Mammary epithelial cell (primary cell): ENCODE measurements at regions of chr2 and their contacts with region 1.

Region 1: GRCh38 chr2:229921892-229922445 is at the start of gene TRIP12:
- DNase-seq: peak; percentile 97
- H3K4me3 ChIP-seq: peak within 1 kb of the TSS; percentile 74 to 84 (median 80)
- H3K27ac ChIP-seq: peak within 1 kb of the TSS; percentile 79
- H3K4me1 ChIP-seq: peaks cover 14% of the 10 kb centered on the region
- H3K27me3 ChIP-seq: no peaks in the 10 kb centered on the region
- CTCF ChIP-seq: no peak
- total RNA-seq, gene TRIP12: 235 to 245 TPM

Region 2: GRCh38 chr2:229800997-229801754 is 120.8 kb before region 1 on chr2:
- CTCF ChIA-PET with region 1: no interaction called
- dilution Hi-C with region 1: no loop called
- in situ Hi-C with region 1: no loop called
- intact Hi-C with region 1: loop called (anchors 2 kb)
- DNase-seq: peak; percentile 35
- H3K4me3 ChIP-seq: no peak overlapping the region
- H3K27ac ChIP-seq: peak overlapping the region; percentile 47
- H3K4me1 ChIP-seq: peaks cover 10% of the 10 kb centered on the region
- H3K27me3 ChIP-seq: no peaks in the 10 kb centered on the region
- CTCF ChIP-seq: peak; percentile 78 to 79

Region 3: GRCh38 chr2:229955663-229956062 is 33.7 kb after region 1 on chr2:
- CTCF ChIA-PET with region 1: no interaction called
- dilution Hi-C with region 1: no loop called
- in situ Hi-C with region 1: no loop called
- intact Hi-C with region 1: no loop called
- DNase-seq: no peak
- H3K4me3 ChIP-seq: no peak overlapping the region
- H3K27ac ChIP-seq: no peak overlapping the region
- H3K4me1 ChIP-seq: no peaks in the 10 kb centered on the region
- H3K27me3 ChIP-seq: no peaks in the 10 kb centered on the region
- CTCF ChIP-seq: no peak

Region 4: GRCh38 chr2:230262246-230262645 is 340.3 kb after region 1 on chr2:
- CTCF ChIA-PET with region 1: no interaction called
- dilution Hi-C with region 1: no loop called
- in situ Hi-C with region 1: no loop called
- intact Hi-C with region 1: no loop called
- DNase-seq: no peak
- H3K4me3 ChIP-seq: no peak overlapping the region
- H3K27ac ChIP-seq: no peak overlapping the region
- H3K4me1 ChIP-seq: peaks cover 4% of the 10 kb centered on the region
- H3K27me3 ChIP-seq: no peaks in the 10 kb centered on the region
- CTCF ChIP-seq: no peak